Activated CD4-positive, alpha-beta memory T cell treated with anti-CD3 and anti-CD28 coated beads, Interleukin-2, amount 10 ng/mL, durations not matched to agents 7 days and 5 days (primary cell): ENCODE measurements at regions of chr1 and their contacts with region 1.

Region 1: DNA sequence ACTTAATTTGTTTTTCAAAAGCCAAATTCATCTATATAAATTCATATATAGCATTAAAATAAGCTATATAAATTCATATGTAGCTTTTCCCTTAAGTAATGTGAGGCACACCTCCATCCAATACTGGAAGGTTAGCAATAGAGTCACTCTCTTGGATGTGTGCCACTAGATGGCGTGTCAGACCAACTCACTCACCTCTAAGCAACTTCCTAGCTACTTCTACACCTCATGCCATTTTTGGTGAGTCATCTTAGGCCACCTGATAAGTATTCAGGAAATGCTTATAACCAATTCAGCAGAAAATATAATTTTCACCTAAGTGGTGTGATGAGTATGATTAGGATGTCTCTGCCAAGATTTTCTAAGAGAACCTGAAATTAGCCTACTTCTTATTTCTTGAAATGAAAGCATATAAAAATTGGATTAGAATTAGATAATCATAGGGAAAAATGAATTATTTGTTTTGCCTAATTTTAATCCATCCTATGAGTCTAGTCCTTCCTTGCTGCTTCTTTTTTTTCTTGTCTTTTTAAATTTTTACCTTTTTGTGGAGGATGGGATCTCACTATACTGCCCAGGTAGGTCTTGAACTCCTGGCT is 34.4 kb upstream of the TADA1 start:
- DNase-seq: peak; percentile 83
- H3K4me3 Mint-ChIP-seq: no peak overlapping the region
- H3K27ac Mint-ChIP-seq: no peak overlapping the region
- H3K4me1 Mint-ChIP-seq: peaks cover 41% of the 10 kb centered on the region
- H3K27me3 Mint-ChIP-seq: peaks cover 6% of the 10 kb centered on the region

Region 2: DNA sequence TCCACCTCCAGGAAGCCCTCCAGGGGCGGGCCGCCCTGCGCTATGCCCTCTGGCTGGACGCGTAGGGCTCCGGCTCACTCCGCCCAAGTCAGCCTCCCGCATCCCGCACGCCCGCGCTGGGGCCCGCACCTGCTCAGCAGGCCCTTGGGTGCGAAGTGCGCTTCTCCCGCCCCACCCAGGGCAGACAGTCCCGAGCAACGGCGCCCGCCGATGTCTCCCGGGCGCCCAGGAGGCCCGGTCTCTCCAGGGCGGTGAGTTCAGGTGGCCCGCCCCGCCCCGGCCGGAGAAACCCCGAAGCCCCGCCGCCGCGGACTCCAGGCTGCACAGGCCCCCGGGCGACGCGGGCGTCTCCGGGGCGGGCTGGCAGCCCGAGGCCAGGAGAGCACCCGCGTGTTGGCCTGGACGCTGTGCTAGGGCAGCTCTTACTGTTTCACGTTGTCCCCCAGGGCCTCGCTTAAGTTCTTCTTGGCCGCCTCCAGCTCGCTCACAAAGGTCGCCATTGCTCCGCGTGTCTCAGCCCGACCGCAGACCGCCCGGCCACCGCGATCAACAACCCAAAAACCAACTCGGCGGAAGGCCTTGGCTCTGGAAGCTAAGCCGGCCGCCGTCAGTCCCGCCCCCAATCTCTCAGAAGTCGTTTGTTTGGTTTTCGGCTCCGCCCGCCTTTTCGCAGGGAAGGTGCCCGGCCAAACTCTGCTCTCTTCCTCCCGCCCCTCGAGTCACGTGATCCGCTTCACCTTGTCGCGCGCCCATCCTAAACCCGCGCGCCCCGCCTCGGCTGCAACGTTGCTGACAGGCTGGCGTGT is 34.6 kb before region 1 on chr1 and contains the start of gene TADA1:
- CTCF ChIA-PET with region 1: interaction called, 21 read pairs
- POLR2A ChIA-PET with region 1: interaction called, 23 read pairs
- DNase-seq: peak; percentile 99
- H3K4me3 Mint-ChIP-seq: peak within 1 kb of the TSS; percentile 92
- H3K27ac Mint-ChIP-seq: peak within 1 kb of the TSS; percentile 97
- H3K4me1 Mint-ChIP-seq: peaks cover 52% of the 10 kb centered on the region
- H3K27me3 Mint-ChIP-seq: peaks cover 3% of the 10 kb centered on the region
- total RNA-seq, gene TADA1: 17.0 to 17.9 TPM

Region 3: DNA sequence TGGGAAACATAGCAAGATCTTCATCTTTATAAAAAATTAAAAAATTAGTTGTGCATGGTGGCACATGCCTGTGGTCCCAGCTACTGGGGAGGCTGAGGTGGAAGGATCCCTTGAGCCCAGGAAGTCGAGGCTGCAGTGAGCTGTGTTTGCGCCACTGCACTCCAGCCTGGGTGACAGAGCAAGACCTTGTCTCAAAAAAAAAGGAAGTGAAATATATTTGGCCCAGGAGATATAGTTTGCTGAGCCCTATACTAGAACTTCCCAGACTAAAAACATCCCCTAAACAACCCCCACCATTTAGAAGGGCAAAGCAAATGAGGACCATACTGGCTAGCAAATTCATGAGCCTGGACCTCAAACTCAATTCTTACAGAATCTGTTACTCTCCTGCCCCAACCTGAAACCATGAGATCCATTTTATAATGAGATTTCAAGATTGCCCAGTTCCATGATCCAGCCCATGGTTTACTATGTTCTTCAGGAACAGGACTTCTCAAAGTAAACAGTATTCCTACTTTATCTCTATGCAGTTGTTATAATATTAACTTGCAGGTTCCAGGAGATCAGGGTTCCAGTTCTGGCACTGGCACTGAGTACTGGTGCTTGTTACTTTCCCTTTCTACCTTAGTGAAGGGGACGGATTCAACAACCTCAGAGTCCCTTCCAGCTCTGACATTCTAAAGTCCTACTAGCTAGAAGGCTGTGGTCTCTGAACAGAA is 14.5 kb after region 1 on chr1:
- CTCF ChIA-PET with region 1: interaction called, 11 read pairs
- POLR2A ChIA-PET with region 1: no interaction called
- DNase-seq: no peak
- H3K4me3 Mint-ChIP-seq: no peak overlapping the region
- H3K27ac Mint-ChIP-seq: no peak overlapping the region
- H3K4me1 Mint-ChIP-seq: no peaks in the 10 kb centered on the region
- H3K27me3 Mint-ChIP-seq: peaks cover 14% of the 10 kb centered on the region

Region 4: DNA sequence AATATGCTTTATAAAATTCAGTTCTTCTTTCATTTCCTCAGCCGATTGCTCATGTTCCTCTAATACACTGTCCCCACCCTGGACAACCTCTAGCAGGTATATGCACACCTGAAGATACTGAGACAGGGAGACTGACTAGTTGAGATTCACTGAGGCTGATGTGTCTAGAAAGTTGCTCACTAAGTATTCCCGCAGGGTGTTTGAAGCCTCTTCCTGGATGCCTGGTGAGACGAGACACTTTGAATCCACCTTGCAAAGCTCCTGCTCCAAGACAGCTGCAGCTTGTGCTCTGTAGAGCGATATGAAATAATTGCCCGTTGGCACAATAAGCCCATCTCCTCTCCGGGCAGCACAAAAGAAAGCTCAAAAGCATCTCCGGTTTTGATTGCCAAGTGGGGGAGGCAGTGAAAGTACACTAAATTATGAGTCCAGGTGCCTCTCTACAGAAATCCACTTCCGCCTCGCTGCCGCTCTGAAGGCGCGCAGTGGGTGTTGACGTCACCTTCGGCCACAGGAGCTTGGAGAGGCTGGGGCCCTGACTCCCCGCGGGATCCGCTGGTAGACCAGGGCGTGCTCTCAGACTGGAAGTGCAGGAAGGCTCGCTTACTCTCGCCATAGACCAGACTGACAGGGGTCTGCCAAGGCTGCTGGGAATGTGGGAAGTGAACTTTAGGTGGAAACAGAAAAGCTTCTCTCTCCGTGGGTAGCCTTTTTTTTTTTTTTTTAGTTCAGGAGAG is 133.4 kb after region 1 on chr1:
- CTCF ChIA-PET with region 1: interaction called, 13 read pairs
- POLR2A ChIA-PET with region 1: interaction called, 4 read pairs
- DNase-seq: peak; percentile 85
- H3K4me3 Mint-ChIP-seq: peak overlapping the region; percentile 65
- H3K27ac Mint-ChIP-seq: peak overlapping the region; percentile 23
- H3K4me1 Mint-ChIP-seq: peaks cover 14% of the 10 kb centered on the region
- H3K27me3 Mint-ChIP-seq: peaks cover 35% of the 10 kb centered on the region

Region 5: GRCh38 chr1:167066333-167067122 is 156.0 kb after region 1 on chr1:
- CTCF ChIA-PET with region 1: interaction called, 722 read pairs
- POLR2A ChIA-PET with region 1: interaction called, 47 read pairs
- DNase-seq: peak; percentile 80
- H3K4me3 Mint-ChIP-seq: no peak overlapping the region
- H3K27ac Mint-ChIP-seq: no peak overlapping the region
- H3K4me1 Mint-ChIP-seq: peaks cover 1% of the 10 kb centered on the region
- H3K27me3 Mint-ChIP-seq: peaks cover 2% of the 10 kb centered on the region